Activated CD4-positive, alpha-beta T cell treated with anti-CD3 and anti-CD28 coated beads for 36 hours (primary cell): ENCODE measurements at regions of chr16 and their contacts with region 1.

Region 1: GRCh38 chr16:19375561-19376158 is 42.0 kb upstream of the TMC5 start:
- DNase-seq: peak; percentile 61
- ATAC-seq: no peak
- H3K4me3 Mint-ChIP-seq: no peak overlapping the region
- H3K27ac Mint-ChIP-seq: no peak overlapping the region
- H3K4me1 Mint-ChIP-seq: peaks cover 7% of the 10 kb centered on the region
- H3K27me3 Mint-ChIP-seq: no peaks in the 10 kb centered on the region

Region 2: GRCh38 chr16:19167710-19168370 is 207.8 kb before region 1 on chr16 and contains the start of gene SYT17:
- CTCF ChIA-PET with region 1: no interaction called
- POLR2A ChIA-PET with region 1: no interaction called
- intact Hi-C with region 1: loop called (anchors 1 to 5 kb)
- DNase-seq: peak; percentile 77
- ATAC-seq: peak; percentile 97
- H3K4me3 Mint-ChIP-seq: no peak within 1 kb of the TSS
- H3K27ac Mint-ChIP-seq: no peak within 1 kb of the TSS
- H3K4me1 Mint-ChIP-seq: no peaks in the 10 kb centered on the region
- H3K27me3 Mint-ChIP-seq: peaks cover 18% of the 10 kb centered on the region
- total RNA-seq, gene SYT17: not detected

Region 3: GRCh38 chr16:19213890-19214289 is 161.8 kb before region 1 on chr16:
- CTCF ChIA-PET with region 1: no interaction called
- POLR2A ChIA-PET with region 1: no interaction called
- intact Hi-C with region 1: loop called in 1 of 2 experiments (anchors 2 kb)
- DNase-seq: peak; percentile 19
- ATAC-seq: no peak
- H3K4me3 Mint-ChIP-seq: no peak overlapping the region
- H3K27ac Mint-ChIP-seq: no peak overlapping the region
- H3K4me1 Mint-ChIP-seq: no peaks in the 10 kb centered on the region
- H3K27me3 Mint-ChIP-seq: no peaks in the 10 kb centered on the region

Region 4: DNA sequence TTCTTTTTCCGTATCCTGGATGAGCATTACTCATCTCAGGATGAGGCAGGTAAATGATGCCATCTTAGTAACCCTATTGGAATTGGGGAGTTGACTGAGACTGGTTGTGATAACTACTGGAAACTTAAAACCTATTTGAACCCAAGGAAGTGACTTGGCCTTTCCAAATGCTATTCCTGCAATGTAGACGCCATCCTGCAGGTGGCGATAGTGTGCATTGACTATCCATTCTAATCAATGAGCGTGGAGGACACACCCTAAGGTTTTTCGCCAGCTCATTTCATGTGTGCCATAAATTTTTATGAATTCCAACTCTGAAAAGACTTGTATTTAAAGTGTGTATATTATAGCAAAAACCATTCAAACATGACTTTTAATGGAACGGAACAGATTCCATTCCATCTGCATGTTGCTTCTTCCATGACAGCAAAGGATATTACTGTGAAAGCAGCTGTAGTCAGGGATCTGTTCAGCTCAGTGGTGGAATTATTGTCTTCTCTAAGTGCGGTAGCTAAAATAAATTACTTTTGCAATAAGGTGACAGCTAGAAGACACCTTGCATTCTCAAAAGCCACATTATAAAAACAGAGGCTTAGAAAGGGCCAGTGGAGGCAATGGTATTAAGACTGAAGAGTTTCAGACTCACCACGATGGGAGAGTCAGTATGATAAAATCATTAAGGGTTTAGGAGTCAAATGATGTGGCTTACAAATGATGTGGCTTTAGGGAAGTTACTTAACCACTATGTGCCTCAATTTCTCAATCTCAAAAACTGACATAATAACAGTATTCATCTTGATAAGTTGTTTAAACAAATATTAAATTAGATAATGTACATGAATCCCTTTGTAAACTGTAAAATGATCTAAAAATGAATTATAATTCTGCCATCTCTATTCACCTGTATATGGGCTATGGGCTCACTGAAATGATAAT is 152.2 kb before region 1 on chr16:
- CTCF ChIA-PET with region 1: interaction called, 3 read pairs
- POLR2A ChIA-PET with region 1: no interaction called
- intact Hi-C with region 1: loop called (anchors 1 kb)
- DNase-seq: peak; percentile 76
- ATAC-seq: no peak
- H3K4me3 Mint-ChIP-seq: no peak overlapping the region
- H3K27ac Mint-ChIP-seq: no peak overlapping the region
- H3K4me1 Mint-ChIP-seq: no peaks in the 10 kb centered on the region
- H3K27me3 Mint-ChIP-seq: peaks cover 11% of the 10 kb centered on the region

Region 5: DNA sequence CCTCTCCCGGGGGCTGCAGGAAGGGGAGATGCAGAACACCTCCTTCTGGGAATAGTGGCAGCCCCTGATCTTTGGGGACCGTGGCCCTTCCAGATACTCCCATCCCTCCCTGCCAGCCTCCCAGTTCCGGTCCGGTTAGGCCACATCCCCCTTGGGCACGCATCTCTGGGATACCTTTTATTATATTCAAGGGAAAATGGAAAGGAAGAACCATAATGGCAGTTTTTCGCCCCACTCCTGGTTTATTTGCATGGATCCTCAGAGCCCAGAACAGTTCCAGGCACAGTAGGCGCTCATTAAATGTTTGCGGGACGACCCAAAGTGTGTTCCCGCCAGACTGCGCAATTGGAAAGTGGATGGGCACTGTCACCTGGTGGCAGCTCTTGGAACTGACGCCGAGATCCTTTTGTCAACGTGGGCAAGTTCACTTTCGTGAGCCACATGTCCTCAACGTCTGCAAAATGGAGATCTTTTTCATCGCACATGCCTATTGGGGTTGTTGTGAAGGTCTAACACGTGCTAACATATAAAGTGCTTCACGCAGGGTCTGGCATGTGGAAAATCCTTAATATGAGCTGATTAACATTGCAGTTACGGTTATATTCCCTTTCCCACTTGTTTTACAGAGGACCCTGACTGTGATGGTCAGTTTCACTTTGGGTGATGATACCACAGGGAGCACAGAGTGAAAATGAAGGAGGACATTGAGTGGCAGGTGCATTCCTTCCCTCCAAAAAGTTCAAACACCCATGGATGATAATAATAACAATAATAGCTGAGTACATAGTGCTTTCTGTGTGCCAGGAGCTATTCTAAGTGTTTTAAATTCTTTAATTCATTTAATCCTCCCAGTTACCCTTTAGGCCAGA is 510.6 kb after region 1 on chr16:
- CTCF ChIA-PET with region 1: no interaction called
- POLR2A ChIA-PET with region 1: no interaction called
- intact Hi-C with region 1: no loop called
- DNase-seq: peak; percentile 90
- ATAC-seq: peak; percentile 79
- H3K4me3 Mint-ChIP-seq: peak overlapping the region; percentile 71
- H3K27ac Mint-ChIP-seq: peak overlapping the region; percentile 47
- H3K4me1 Mint-ChIP-seq: peaks cover 26% of the 10 kb centered on the region
- H3K27me3 Mint-ChIP-seq: peaks cover 18% of the 10 kb centered on the region